ENCODE measurements at regions of chr2 and their contacts with region 1.

Region 1: GRCh38 chr2:208265801-208266552 is at the start of gene PIKFYVE:
- DNase-seq: peak; percentile 96
- ATAC-seq: peak; percentile 87
- H3K4me3 ChIP-seq: peak within 1 kb of the TSS; percentile 61 to 98 (median 76)
- H3K4me3 Mint-ChIP-seq: peak within 1 kb of the TSS; percentile 95
- H3K27ac ChIP-seq: peak within 1 kb of the TSS; percentile 85 to 89
- H3K27ac Mint-ChIP-seq: peak within 1 kb of the TSS; percentile 99
- H3K4me1 ChIP-seq: peaks cover 34 to 42% of the 10 kb centered on the region in 2 donors
- H3K4me1 Mint-ChIP-seq: peaks cover 44% of the 10 kb centered on the region
- H3K27me3 ChIP-seq: no peaks in the 10 kb centered on the region
- H3K27me3 Mint-ChIP-seq: no peaks in the 10 kb centered on the region
- CTCF ChIP-seq: no peak
- total RNA-seq, gene PIKFYVE: 79.3 and 80.9 TPM in 2 replicates

Region 2: DNA sequence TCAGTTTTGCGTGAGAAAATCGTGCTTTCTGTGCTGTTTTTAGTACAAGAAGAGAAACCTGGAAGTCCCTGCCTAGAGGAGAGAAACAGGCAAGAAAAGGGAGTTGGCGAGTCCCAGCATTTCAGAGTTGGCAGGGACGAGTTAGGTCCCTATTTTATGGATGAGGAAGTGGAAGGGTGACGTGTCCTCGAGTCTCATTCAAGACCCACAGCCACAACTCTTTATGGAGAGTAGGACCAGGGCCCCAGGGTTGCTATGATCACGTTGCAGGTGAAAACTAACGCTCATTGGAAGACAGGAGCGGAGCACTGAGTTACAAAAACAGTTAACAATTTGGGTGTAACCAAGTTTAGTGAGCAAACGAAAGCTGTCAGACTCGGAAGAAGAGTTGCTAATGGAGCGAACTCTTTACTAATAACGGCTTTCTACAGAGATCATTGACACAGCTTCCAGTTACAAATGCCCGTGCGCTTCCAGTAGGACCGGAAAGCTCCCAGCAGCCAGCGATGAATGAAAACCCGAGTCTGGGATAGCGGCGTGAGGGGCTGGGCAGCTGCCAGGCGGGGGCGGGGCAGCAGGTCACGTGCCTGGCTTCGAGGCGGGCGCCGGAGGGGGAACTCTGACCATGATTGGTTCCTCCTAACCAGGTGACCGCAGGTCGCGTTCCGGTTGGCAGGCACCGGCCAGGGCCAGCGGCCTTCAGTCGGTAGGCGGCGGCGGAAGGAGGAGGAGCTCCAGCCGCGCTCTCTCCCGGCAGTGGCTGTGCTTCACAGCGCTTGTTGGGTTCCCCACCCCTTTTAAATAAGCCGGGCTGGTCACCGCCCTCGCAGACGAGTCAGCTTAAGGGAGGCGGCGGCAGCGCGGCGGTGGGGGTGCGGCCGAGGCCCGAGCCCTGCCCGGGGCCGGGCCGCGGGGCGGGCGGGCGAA is 554.9 kb before region 1 on chr2 and contains the start of gene CCNYL1:
- CTCF ChIA-PET with region 1: no interaction called
- POLR2A ChIA-PET with region 1: no interaction called
- intact Hi-C with region 1: loop called (anchors 5 kb)
- DNase-seq: peak; percentile 99
- ATAC-seq: peak; percentile 94
- H3K4me3 ChIP-seq: peak within 1 kb of the TSS; percentile 81 to 98 (median 93)
- H3K4me3 Mint-ChIP-seq: peak within 1 kb of the TSS; percentile 91
- H3K27ac ChIP-seq: peak within 1 kb of the TSS; percentile 78 to 83
- H3K27ac Mint-ChIP-seq: peak within 1 kb of the TSS; percentile 88
- H3K4me1 ChIP-seq: peaks cover 17 to 19% of the 10 kb centered on the region in 2 donors
- H3K4me1 Mint-ChIP-seq: peaks cover 23% of the 10 kb centered on the region
- H3K27me3 ChIP-seq: no peaks in the 10 kb centered on the region
- H3K27me3 Mint-ChIP-seq: no peaks in the 10 kb centered on the region
- CTCF ChIP-seq: no peak
- total RNA-seq, gene CCNYL1: 14.2 and 15.1 TPM in 2 replicates

Region 3: GRCh38 chr2:208025037-208025813 is 240.8 kb before region 1 on chr2 and contains the start of gene PLEKHM3:
- CTCF ChIA-PET with region 1: no interaction called
- POLR2A ChIA-PET with region 1: no interaction called
- intact Hi-C with region 1: loop called (anchors 10 kb)
- DNase-seq: peak; percentile 83
- ATAC-seq: peak; percentile 92
- H3K4me3 ChIP-seq: peak within 1 kb of the TSS; percentile 71 to 95 (median 92)
- H3K4me3 Mint-ChIP-seq: peak within 1 kb of the TSS; percentile 95
- H3K27ac ChIP-seq: peak within 1 kb of the TSS; percentile 57 to 84
- H3K27ac Mint-ChIP-seq: peak within 1 kb of the TSS; percentile 96
- H3K4me1 ChIP-seq: peaks cover 7 to 8% of the 10 kb centered on the region in 2 donors
- H3K4me1 Mint-ChIP-seq: peaks cover 25% of the 10 kb centered on the region
- H3K27me3 ChIP-seq: no peaks in the 10 kb centered on the region
- H3K27me3 Mint-ChIP-seq: no peaks in the 10 kb centered on the region
- CTCF ChIP-seq: no peak
- total RNA-seq, gene PLEKHM3: 17.7 and 19.5 TPM in 2 replicates

Region 4: GRCh38 chr2:208254871-208255556 is 11.0 kb before region 1 on chr2 and contains the start of gene IDH1:
- CTCF ChIA-PET with region 1: interaction called, 63 read pairs
- POLR2A ChIA-PET with region 1: interaction called, 31 read pairs
- intact Hi-C with region 1: loop called (anchors 1 kb)
- DNase-seq: peak; percentile 94
- ATAC-seq: peak; percentile 80
- H3K4me3 ChIP-seq: peak within 1 kb of the TSS; percentile 83 to 99 (median 93)
- H3K4me3 Mint-ChIP-seq: peak within 1 kb of the TSS; percentile 99
- H3K27ac ChIP-seq: peak within 1 kb of the TSS; percentile 47 to 65
- H3K27ac Mint-ChIP-seq: peak within 1 kb of the TSS; percentile 86
- H3K4me1 ChIP-seq: peaks cover 30 to 41% of the 10 kb centered on the region in 2 donors
- H3K4me1 Mint-ChIP-seq: peaks cover 52% of the 10 kb centered on the region
- H3K27me3 ChIP-seq: no peaks in the 10 kb centered on the region
- H3K27me3 Mint-ChIP-seq: no peaks in the 10 kb centered on the region
- CTCF ChIP-seq: peak; percentile 33
- total RNA-seq, gene IDH1: 41.4 TPM in 2 replicates

Region 5: GRCh38 chr2:208320686-208321085 is 54.7 kb after region 1 on chr2:
- CTCF ChIA-PET with region 1: interaction called, 5 read pairs
- POLR2A ChIA-PET with region 1: interaction called, 4 read pairs
- intact Hi-C with region 1: loop called (anchors 2 kb)
- DNase-seq: peak; percentile 64
- ATAC-seq: peak; percentile 82
- H3K4me3 ChIP-seq: peak overlapping the region; percentile 18 to 63 (median 38)
- H3K4me3 Mint-ChIP-seq: peak overlapping the region; percentile 82
- H3K27ac ChIP-seq: peak overlapping the region; percentile 67 to 87
- H3K27ac Mint-ChIP-seq: peak overlapping the region; percentile 90
- H3K4me1 ChIP-seq: peaks cover 49 to 51% of the 10 kb centered on the region in 2 donors
- H3K4me1 Mint-ChIP-seq: peaks cover 68% of the 10 kb centered on the region
- H3K27me3 ChIP-seq: no peaks in the 10 kb centered on the region
- H3K27me3 Mint-ChIP-seq: no peaks in the 10 kb centered on the region
- CTCF ChIP-seq: no peak

Measured in B cell (primary cell).